Dendritic cell treated with granulocyte-macrophage colony-stimulating factor and Interleukin-4, amounts not matched to agents 40 ng/mL and 50 ng/mL, for 4 days (primary cell): ENCODE measurements at regions of chr3 and their contacts with region 1.

Region 1: GRCh38 chr3:68876112-68876713 is 56.1 kb downstream of the TAFA4 start:
- H3K4me3 Mint-ChIP-seq: no peak overlapping the region
- H3K27ac Mint-ChIP-seq: no peak overlapping the region
- H3K4me1 Mint-ChIP-seq: peaks cover 8% of the 10 kb centered on the region
- H3K27me3 Mint-ChIP-seq: peaks cover 7% of the 10 kb centered on the region

Region 2: DNA sequence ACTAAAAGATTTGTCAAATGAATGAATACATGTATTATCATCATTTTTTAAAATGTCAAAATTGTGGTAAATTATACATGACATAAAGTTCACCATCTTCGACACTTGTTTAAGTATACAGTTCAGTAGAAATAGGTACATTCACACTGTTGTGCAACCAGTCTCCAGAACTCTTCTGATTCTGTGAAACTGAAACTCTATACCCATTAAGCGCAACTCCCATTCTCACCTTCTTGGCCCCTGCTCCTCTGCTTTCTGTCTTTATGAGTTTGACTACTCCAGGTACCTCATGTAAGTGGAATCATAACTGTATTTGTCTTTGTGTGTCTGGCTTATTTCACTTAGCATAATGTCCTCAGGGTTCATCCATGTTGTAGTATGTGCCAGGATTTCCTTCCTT is 1928.2 kb before region 1 on chr3:
- intact Hi-C with region 1: loop called (anchors 10 kb)
- H3K4me3 Mint-ChIP-seq: no peak overlapping the region
- H3K27ac Mint-ChIP-seq: no peak overlapping the region
- H3K4me1 Mint-ChIP-seq: no peaks in the 10 kb centered on the region
- H3K27me3 Mint-ChIP-seq: peaks cover 1% of the 10 kb centered on the region